GM12878 (cell line): ENCODE measurements at regions of chr13 and their contacts with region 1.

Region 1: GRCh38 chr13:106197496-106197895 is 338.0 kb downstream of the EFNB2 start:
- DNase-seq: no peak
- ATAC-seq: no peak
- H3K4me3 ChIP-seq: no peak overlapping the region
- H3K27ac ChIP-seq: no peak overlapping the region
- H3K4me1 ChIP-seq: no peaks in the 10 kb centered on the region
- H3K27me3 ChIP-seq: no peaks in the 10 kb centered on the region
- CTCF ChIP-seq: no peak
- EP300 ChIP-seq: no peak
- POLR2A ChIP-seq: no peak
- RAD21 ChIP-seq: no peak

Region 2: GRCh38 chr13:106173891-106174610 is 23.4 kb before region 1 on chr13:
- CTCF ChIA-PET with region 1: no interaction called
- POLR2A ChIA-PET with region 1: no interaction called
- RAD21 ChIA-PET with region 1: no interaction called
- SMC1A ChIA-PET with region 1: interaction called, 3 read pairs
- in situ Hi-C with region 1: no loop called
- intact Hi-C with region 1: loop called (anchors 2 kb)
- DNase-seq: no peak
- ATAC-seq: no peak
- H3K4me3 ChIP-seq: no peak overlapping the region
- H3K27ac ChIP-seq: no peak overlapping the region
- H3K4me1 ChIP-seq: no peaks in the 10 kb centered on the region
- H3K27me3 ChIP-seq: no peaks in the 10 kb centered on the region
- CTCF ChIP-seq: no peak
- EP300 ChIP-seq: no peak
- POLR2A ChIP-seq: no peak
- RAD21 ChIP-seq: no peak

Region 3: GRCh38 chr13:106184790-106185189 is 12.7 kb before region 1 on chr13:
- CTCF ChIA-PET with region 1: no interaction called
- POLR2A ChIA-PET with region 1: no interaction called
- RAD21 ChIA-PET with region 1: no interaction called
- SMC1A ChIA-PET with region 1: no interaction called
- in situ Hi-C with region 1: no loop called
- intact Hi-C with region 1: no loop called
- DNase-seq: no peak
- ATAC-seq: no peak
- H3K4me3 ChIP-seq: no peak overlapping the region
- H3K27ac ChIP-seq: no peak overlapping the region
- H3K4me1 ChIP-seq: no peaks in the 10 kb centered on the region
- H3K27me3 ChIP-seq: no peaks in the 10 kb centered on the region
- CTCF ChIP-seq: no peak
- EP300 ChIP-seq: no peak
- POLR2A ChIP-seq: no peak
- RAD21 ChIP-seq: no peak

Region 4: DNA sequence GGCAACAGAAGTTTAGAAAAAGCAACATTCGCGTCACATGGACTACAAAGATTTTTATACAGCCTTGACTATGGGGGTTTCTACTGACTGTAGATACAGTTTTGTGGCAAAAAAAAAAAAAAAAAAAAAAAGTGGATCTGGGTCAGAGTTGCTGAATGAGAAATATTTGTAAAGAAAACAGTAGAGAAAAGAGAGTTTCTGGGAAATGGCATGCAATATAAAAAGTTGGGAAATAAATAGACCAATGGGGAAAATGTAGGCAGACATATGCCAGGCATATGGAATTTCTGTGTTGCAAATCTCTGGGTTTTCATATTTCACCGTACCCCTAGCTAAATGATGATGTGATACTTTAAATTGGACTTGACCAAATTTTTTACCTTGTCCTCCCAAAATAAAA is 22.7 kb after region 1 on chr13:
- CTCF ChIA-PET with region 1: no interaction called
- POLR2A ChIA-PET with region 1: no interaction called
- RAD21 ChIA-PET with region 1: no interaction called
- SMC1A ChIA-PET with region 1: no interaction called
- in situ Hi-C with region 1: no loop called
- intact Hi-C with region 1: no loop called
- DNase-seq: no peak
- ATAC-seq: no peak
- H3K4me3 ChIP-seq: no peak overlapping the region
- H3K27ac ChIP-seq: no peak overlapping the region
- H3K4me1 ChIP-seq: no peaks in the 10 kb centered on the region
- H3K27me3 ChIP-seq: no peaks in the 10 kb centered on the region
- CTCF ChIP-seq: no peak
- EP300 ChIP-seq: no peak
- POLR2A ChIP-seq: no peak
- RAD21 ChIP-seq: no peak

Region 5: GRCh38 chr13:106490569-106491321 is 293.2 kb after region 1 on chr13:
- CTCF ChIA-PET with region 1: no interaction called
- POLR2A ChIA-PET with region 1: no interaction called
- RAD21 ChIA-PET with region 1: no interaction called
- SMC1A ChIA-PET with region 1: no interaction called
- in situ Hi-C with region 1: no loop called
- intact Hi-C with region 1: no loop called
- DNase-seq: no peak
- ATAC-seq: no peak
- H3K4me3 ChIP-seq: no peak overlapping the region
- H3K27ac ChIP-seq: no peak overlapping the region
- H3K4me1 ChIP-seq: peaks cover 6% of the 10 kb centered on the region
- H3K27me3 ChIP-seq: peaks cover 0 to under 1% of the 10 kb centered on the region in 2 experiments; a peak in 1 of 4 replicates
- CTCF ChIP-seq: no peak
- EP300 ChIP-seq: no peak
- POLR2A ChIP-seq: no peak
- RAD21 ChIP-seq: no peak